Brain microvascular endothelial cell (primary cell): ENCODE measurements at regions of chr2 and their contacts with region 1.

Region 1: DNA sequence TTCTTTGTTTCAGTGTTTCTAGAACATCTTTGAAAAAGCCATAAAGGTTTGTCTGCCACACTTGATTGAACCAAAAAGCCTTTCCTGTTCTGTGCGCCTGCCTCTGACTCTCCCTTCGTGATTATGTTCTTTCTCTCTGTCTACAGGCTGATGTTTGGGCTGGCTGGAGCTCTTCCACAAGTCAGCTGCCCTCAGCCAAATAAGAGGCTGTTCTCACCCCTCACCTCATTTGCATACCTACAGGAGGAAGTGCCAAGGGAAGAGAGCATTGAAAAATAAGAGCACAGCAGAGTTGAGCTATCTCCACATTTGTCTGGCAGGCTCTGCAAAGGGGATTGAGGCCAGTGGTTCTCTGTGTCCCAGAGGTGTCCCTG is 15.8 kb downstream of the INPP5D start:
- DNase-seq: no peak
- H3K4me3 ChIP-seq: no peak overlapping the region
- H3K27ac ChIP-seq: no peak overlapping the region
- H3K27me3 ChIP-seq: no peaks in the 10 kb centered on the region
- CTCF ChIP-seq: no peak

Region 2: GRCh38 chr2:233247765-233248164 is 171.8 kb after region 1 on chr2:
- in situ Hi-C with region 1: loop called (anchors 25 kb)
- DNase-seq: no peak
- H3K4me3 ChIP-seq: no peak overlapping the region
- H3K27ac ChIP-seq: no peak overlapping the region
- H3K27me3 ChIP-seq: no peaks in the 10 kb centered on the region
- CTCF ChIP-seq: no peak